ENCODE measurements at regions of chr21 and their contacts with region 1.

Region 1: DNA sequence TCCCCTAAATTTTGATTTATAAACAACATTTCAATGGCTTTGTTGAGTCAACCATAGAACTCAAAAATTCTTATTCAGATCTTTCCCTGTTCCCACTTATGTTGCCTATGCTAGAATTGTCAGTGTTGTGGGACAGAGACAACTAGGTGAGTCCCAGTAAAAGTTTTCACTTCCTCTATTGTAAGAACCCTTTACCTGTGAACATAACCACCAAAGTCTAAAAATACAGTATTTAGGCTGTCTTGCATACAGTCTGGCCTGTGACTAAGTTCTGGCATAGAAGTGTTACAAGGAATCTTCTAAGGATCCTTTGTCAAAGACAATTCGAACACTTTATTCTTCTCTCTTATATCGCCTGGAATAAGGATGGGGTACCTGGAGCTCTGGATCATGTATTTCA is 1047.9 kb upstream of the NCAM2 start:
- DNase-seq: no peak
- H3K4me3 ChIP-seq: no peak overlapping the region
- CTCF ChIP-seq: no peak
- POLR2A ChIP-seq: no peak

Region 2: GRCh38 chr21:20811702-20812101 is 861.4 kb after region 1 on chr21:
- intact Hi-C with region 1: loop called (anchors 10 kb)
- DNase-seq: no peak
- H3K4me3 ChIP-seq: no peak overlapping the region
- CTCF ChIP-seq: no peak
- POLR2A ChIP-seq: no peak

Measured in lower leg skin (tissue), 4 donors.